ENCODE measurements at regions of chr3 and their contacts with region 1.

Region 1: GRCh38 chr3:150721285-150722130 is 17.8 kb upstream of the ERICH6 start:
- DNase-seq: peak in 3 of 14 experiments; percentile 74 to 82 (median 82)
- ATAC-seq: peak; percentile 87
- H3K4me3 ChIP-seq: no peak overlapping the region
- H3K4me3 Mint-ChIP-seq: no peak overlapping the region
- H3K27ac ChIP-seq: no peak overlapping the region
- H3K27ac Mint-ChIP-seq: no peak overlapping the region
- H3K4me1 ChIP-seq: peaks cover 3% of the 10 kb centered on the region
- H3K4me1 Mint-ChIP-seq: peaks cover 5% of the 10 kb centered on the region
- H3K27me3 ChIP-seq: no peaks in the 10 kb centered on the region
- H3K27me3 Mint-ChIP-seq: no peaks in the 10 kb centered on the region
- CTCF ChIP-seq: peak; percentile 88

Region 2: DNA sequence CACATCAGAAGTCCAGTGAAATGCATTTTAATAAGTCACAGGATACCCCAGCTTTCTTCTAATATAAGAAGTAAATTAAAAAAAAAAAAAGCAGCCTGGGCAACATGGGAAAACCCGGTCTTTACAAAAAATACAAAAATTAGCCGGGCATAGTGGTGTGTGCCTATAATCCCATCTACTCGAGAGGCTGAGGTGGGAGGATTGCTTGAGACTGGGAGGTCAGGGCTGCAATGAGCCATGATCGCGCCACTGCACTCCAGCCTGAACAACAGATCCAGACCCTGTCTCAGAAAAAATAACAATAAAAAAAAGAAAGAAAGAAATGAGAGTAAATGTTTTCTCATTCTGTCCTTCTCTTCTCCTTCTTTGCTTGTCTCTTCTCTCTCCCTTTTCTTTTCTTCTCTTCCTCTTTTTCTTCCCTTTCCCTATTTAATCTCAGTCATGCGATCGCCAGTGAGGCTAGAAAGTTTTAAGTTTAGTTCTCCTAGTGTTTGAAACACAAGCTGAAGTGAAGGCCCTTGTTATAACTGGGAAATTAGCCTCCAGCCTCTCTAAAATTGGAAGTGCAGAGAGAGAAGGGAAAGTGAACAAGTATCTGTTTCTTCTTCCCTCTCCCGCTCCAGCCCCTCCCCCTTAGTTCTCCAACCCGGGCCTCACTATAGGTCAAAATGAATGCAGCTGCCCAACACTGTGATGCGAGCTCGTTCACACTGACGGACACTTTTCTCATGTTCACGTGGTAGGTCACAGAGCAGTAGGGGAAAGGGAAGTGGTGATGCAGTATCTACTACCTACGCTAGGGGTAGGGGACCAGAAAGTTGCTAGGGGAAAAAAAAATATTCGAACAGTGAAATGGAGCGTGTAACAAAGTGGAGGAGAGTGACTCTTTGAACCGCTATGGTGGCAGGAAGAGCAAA is 337.0 kb before region 1 on chr3:
- CTCF ChIA-PET with region 1: no interaction called
- POLR2A ChIA-PET with region 1: no interaction called
- intact Hi-C with region 1: no loop called
- DNase-seq: peak; percentile 2 to 85 (median 18)
- ATAC-seq: peak; percentile 99
- H3K4me3 ChIP-seq: peak overlapping the region; percentile 37
- H3K4me3 Mint-ChIP-seq: peak overlapping the region; percentile 17
- H3K27ac ChIP-seq: peak overlapping the region in 1 of 2 donors; percentile 16
- H3K27ac Mint-ChIP-seq: no peak overlapping the region
- H3K4me1 ChIP-seq: peaks cover 18% of the 10 kb centered on the region
- H3K4me1 Mint-ChIP-seq: peaks cover 20% of the 10 kb centered on the region
- H3K27me3 ChIP-seq: no peaks in the 10 kb centered on the region
- H3K27me3 Mint-ChIP-seq: no peaks in the 10 kb centered on the region
- CTCF ChIP-seq: peak; percentile 74

Region 3: GRCh38 chr3:150528354-150528797 is 193.1 kb before region 1 on chr3:
- CTCF ChIA-PET with region 1: no interaction called
- POLR2A ChIA-PET with region 1: no interaction called
- intact Hi-C with region 1: loop called in 1 of 2 experiments (anchors 5 kb)
- DNase-seq: peak in 4 of 14 experiments; percentile 14 to 55 (median 41)
- ATAC-seq: peak; percentile 48
- H3K4me3 ChIP-seq: no peak overlapping the region
- H3K4me3 Mint-ChIP-seq: no peak overlapping the region
- H3K27ac ChIP-seq: no peak overlapping the region
- H3K27ac Mint-ChIP-seq: no peak overlapping the region
- H3K4me1 ChIP-seq: no peaks in the 10 kb centered on the region
- H3K4me1 Mint-ChIP-seq: peaks cover 4% of the 10 kb centered on the region
- H3K27me3 ChIP-seq: no peaks in the 10 kb centered on the region
- H3K27me3 Mint-ChIP-seq: no peaks in the 10 kb centered on the region
- CTCF ChIP-seq: peak; percentile 58

Region 4: DNA sequence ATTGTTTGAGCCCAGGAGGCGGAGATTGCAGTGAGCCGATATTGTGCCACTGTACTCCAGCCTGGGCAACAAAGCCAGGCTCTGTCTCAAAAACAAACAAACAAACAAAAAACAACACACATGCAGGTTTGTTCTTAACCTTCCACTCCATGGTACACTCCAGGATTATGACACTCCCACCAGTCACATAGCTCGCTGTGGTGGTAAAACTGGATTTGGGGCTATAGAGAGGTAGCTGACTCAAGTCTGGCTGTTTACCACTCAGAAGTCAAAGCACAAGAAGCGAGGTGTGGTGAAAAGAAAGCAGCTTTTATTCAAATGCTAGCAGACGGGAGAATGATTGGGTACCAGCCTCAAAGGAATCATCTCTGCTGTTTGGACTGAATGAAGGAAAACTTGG is 90.5 kb after region 1 on chr3:
- CTCF ChIA-PET with region 1: no interaction called
- POLR2A ChIA-PET with region 1: no interaction called
- intact Hi-C with region 1: no loop called
- DNase-seq: no peak
- ATAC-seq: no peak
- H3K4me3 ChIP-seq: no peak overlapping the region
- H3K4me3 Mint-ChIP-seq: no peak overlapping the region
- H3K27ac ChIP-seq: no peak overlapping the region
- H3K27ac Mint-ChIP-seq: no peak overlapping the region
- H3K4me1 ChIP-seq: no peaks in the 10 kb centered on the region
- H3K4me1 Mint-ChIP-seq: no peaks in the 10 kb centered on the region
- H3K27me3 ChIP-seq: no peaks in the 10 kb centered on the region
- H3K27me3 Mint-ChIP-seq: peaks cover 18% of the 10 kb centered on the region
- CTCF ChIP-seq: no peak

Region 5: GRCh38 chr3:150870396-150870795 is 148.9 kb after region 1 on chr3:
- CTCF ChIA-PET with region 1: interaction called, 9 read pairs
- POLR2A ChIA-PET with region 1: no interaction called
- intact Hi-C with region 1: loop called (anchors 1 kb)
- DNase-seq: no peak
- ATAC-seq: no peak
- H3K4me3 ChIP-seq: no peak overlapping the region
- H3K4me3 Mint-ChIP-seq: no peak overlapping the region
- H3K27ac ChIP-seq: no peak overlapping the region
- H3K27ac Mint-ChIP-seq: no peak overlapping the region
- H3K4me1 ChIP-seq: no peaks in the 10 kb centered on the region
- H3K4me1 Mint-ChIP-seq: peaks cover 2% of the 10 kb centered on the region
- H3K27me3 ChIP-seq: no peaks in the 10 kb centered on the region
- H3K27me3 Mint-ChIP-seq: peaks cover 14% of the 10 kb centered on the region
- CTCF ChIP-seq: no peak

Region 6: DNA sequence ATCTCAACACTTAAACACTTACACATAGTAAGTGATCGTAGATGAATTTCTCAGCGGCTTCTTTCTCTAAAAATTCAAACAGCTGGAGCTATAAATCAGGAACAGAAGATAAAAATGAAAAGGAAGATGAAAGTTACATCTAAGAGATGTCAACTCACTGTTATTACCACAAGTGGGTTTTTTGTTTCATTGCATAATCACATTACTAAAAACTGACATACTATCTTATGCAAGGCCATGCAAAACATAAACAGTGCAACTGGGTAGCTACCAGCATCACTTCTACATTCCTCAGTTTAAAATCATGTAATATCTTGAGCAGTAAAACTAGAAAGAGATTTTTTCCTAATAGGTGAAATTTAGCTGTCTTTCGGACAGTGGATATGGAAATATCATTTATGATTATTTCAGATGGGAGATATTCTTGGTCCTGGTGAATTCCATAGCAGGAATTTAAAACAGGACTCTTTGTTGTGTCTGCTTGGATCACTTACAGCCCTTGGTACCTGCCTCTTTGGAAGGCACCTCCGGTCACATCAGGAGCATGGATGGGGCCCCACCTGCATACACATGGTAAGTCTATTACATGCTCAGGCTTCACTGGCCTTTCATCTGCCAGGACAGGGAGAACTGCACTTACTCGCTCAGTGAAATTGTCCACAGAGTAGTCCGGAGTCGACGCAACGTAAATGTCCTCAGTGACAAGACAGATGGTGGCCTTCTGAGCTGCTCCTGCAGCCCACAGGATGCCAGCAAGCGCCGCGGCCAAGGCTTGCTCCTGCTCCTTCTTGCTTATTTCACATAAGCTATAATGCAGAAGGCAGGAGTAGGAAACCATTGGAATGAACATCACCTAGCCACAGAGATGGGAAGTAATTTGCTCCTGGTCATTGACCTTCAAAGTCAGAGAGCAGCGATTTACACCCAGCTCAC is 169.1 kb after region 1 on chr3:
- CTCF ChIA-PET with region 1: no interaction called
- POLR2A ChIA-PET with region 1: no interaction called
- intact Hi-C with region 1: no loop called
- DNase-seq: peak in 2 of 14 experiments; percentile 28 to 31
- ATAC-seq: no peak
- H3K4me3 ChIP-seq: no peak overlapping the region
- H3K4me3 Mint-ChIP-seq: no peak overlapping the region
- H3K27ac ChIP-seq: no peak overlapping the region
- H3K27ac Mint-ChIP-seq: no peak overlapping the region
- H3K4me1 ChIP-seq: no peaks in the 10 kb centered on the region
- H3K4me1 Mint-ChIP-seq: no peaks in the 10 kb centered on the region
- H3K27me3 ChIP-seq: peaks cover 0 to 2% of the 10 kb centered on the region in 2 experiments
- H3K27me3 Mint-ChIP-seq: peaks cover 20% of the 10 kb centered on the region
- CTCF ChIP-seq: no peak

Region 7: DNA sequence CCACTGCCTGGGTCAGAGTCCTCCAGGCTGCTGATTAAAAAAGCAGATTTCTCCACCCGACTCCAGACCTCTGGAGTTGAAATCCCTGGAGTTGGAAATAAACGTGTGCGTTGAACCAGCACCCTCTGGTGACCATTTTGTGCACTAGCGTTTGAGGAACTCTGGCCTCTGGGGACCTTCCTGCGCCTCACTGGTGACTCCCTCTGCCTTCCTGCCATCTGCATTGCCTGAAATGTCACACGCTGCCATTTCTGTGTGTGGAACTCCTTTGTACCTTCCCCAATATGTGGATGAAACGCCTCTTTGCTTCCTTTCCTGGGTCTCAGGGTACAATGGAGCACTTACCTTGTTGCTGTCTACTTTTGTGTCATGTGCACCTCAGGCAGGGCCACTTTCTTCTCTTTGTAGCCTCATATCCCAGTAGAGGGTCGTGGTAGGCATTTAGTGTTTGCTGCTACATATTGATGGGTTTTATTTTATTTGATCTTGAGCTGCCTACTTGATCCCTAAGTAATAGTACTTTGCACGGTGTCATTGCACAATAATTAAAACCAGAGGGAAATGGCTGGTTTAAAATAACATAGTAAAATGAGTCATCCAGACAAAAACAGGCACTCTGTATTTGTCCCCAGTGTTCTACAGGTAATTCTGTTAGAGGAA is 424.7 kb after region 1 on chr3:
- CTCF ChIA-PET with region 1: interaction called, 3 read pairs
- POLR2A ChIA-PET with region 1: no interaction called
- intact Hi-C with region 1: loop called (anchors 2 kb)
- DNase-seq: peak in 12 of 14 experiments; percentile 23 to 78 (median 45)
- ATAC-seq: peak; percentile 98
- H3K4me3 ChIP-seq: no peak overlapping the region
- H3K4me3 Mint-ChIP-seq: no peak overlapping the region
- H3K27ac ChIP-seq: no peak overlapping the region
- H3K27ac Mint-ChIP-seq: no peak overlapping the region
- H3K4me1 ChIP-seq: peaks cover 8% of the 10 kb centered on the region
- H3K4me1 Mint-ChIP-seq: no peaks in the 10 kb centered on the region
- H3K27me3 ChIP-seq: no peaks in the 10 kb centered on the region
- H3K27me3 Mint-ChIP-seq: peaks cover 6% of the 10 kb centered on the region
- CTCF ChIP-seq: peak; percentile 89

Region 8: DNA sequence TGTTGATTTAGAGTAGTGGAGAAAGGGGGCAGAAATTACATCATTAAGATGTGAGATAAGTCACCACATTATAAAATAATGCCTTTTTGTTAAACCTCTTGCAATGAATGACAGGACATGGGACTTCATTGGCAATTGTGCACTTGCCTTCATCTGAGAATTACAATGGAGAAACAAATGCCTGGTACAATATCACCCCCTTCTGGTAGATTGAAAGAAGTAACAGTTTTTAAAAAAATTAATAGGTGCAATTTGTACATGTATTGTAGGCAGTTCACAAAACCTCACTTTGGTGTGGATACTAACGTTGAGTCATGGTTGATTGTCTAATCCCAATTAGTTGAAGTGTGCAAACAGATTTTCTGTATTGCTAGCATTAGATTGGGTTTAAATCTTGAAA is 561.4 kb after region 1 on chr3:
- CTCF ChIA-PET with region 1: no interaction called
- POLR2A ChIA-PET with region 1: no interaction called
- intact Hi-C with region 1: loop called (anchors 5 to 10 kb)
- DNase-seq: peak in 3 of 14 experiments; percentile 72 to 79 (median 78)
- ATAC-seq: peak; percentile 68
- H3K4me3 ChIP-seq: no peak overlapping the region
- H3K4me3 Mint-ChIP-seq: no peak overlapping the region
- H3K27ac ChIP-seq: no peak overlapping the region
- H3K27ac Mint-ChIP-seq: no peak overlapping the region
- H3K4me1 ChIP-seq: peaks cover 11% of the 10 kb centered on the region
- H3K4me1 Mint-ChIP-seq: peaks cover 27% of the 10 kb centered on the region
- H3K27me3 ChIP-seq: no peaks in the 10 kb centered on the region
- H3K27me3 Mint-ChIP-seq: no peaks in the 10 kb centered on the region
- CTCF ChIP-seq: peak; percentile 83

Measured in CD4-positive, alpha-beta T cell (primary cell).